ENCODE measurements at regions of chr1 and their contacts with region 1.

Region 1: GRCh38 chr1:119870917-119871596 is 25.3 kb downstream of the ADAM30 start:
- DNase-seq: peak; percentile 56
- ATAC-seq: peak; percentile 97
- H3K4me3 ChIP-seq: no peak overlapping the region
- H3K27ac ChIP-seq: no peak overlapping the region
- H3K4me1 ChIP-seq: peaks cover 0 to 4% of the 10 kb centered on the region in 2 experiments; a peak in 2 of 4 replicates
- H3K27me3 ChIP-seq: no peaks in the 10 kb centered on the region
- CTCF ChIP-seq: peak; percentile 68 to 98 (median 97)
- POLR2A ChIP-seq: no peak
- RAD21 ChIP-seq: peak; percentile 81

Region 2: GRCh38 chr1:119827010-119827409 is 44.0 kb before region 1 on chr1:
- CTCF ChIA-PET with region 1: no interaction called
- POLR2A ChIA-PET with region 1: no interaction called
- RAD21 ChIA-PET with region 1: no interaction called
- intact Hi-C with region 1: no loop called
- DNase-seq: no peak
- ATAC-seq: peak; percentile 86
- H3K4me3 ChIP-seq: no peak overlapping the region
- H3K27ac ChIP-seq: no peak overlapping the region
- H3K4me1 ChIP-seq: no peaks in the 10 kb centered on the region
- H3K27me3 ChIP-seq: no peaks in the 10 kb centered on the region
- CTCF ChIP-seq: peak in 2 of 3 experiments; percentile 62 to 69; a peak in 4 of 6 replicates
- POLR2A ChIP-seq: no peak
- RAD21 ChIP-seq: no peak

Region 3: GRCh38 chr1:119882132-119882952 is 11.3 kb after region 1 on chr1:
- CTCF ChIA-PET with region 1: interaction called, 10 read pairs
- POLR2A ChIA-PET with region 1: no interaction called
- RAD21 ChIA-PET with region 1: no interaction called
- intact Hi-C with region 1: no loop called
- DNase-seq: no peak
- ATAC-seq: no peak
- H3K4me3 ChIP-seq: no peak overlapping the region
- H3K27ac ChIP-seq: no peak overlapping the region
- H3K4me1 ChIP-seq: no peaks in the 10 kb centered on the region; a peak in 1 of 4 replicates
- H3K27me3 ChIP-seq: peaks cover 6% of the 10 kb centered on the region
- CTCF ChIP-seq: no peak
- POLR2A ChIP-seq: no peak
- RAD21 ChIP-seq: no peak